ENCODE measurements at regions of chr13 and their contacts with region 1.

Region 1: GRCh38 chr13:38914070-38914469 is 76.6 kb downstream of the STOML3 start:
- DNase-seq: no peak
- H3K4me3 ChIP-seq: no peak overlapping the region
- H3K27ac ChIP-seq: no peak overlapping the region
- H3K4me1 ChIP-seq: no peaks in the 10 kb centered on the region
- H3K27me3 ChIP-seq: peaks cover 0 to 3% of the 10 kb centered on the region in 2 experiments
- CTCF ChIP-seq: no peak
- POLR2A ChIP-seq: no peak

Region 2: DNA sequence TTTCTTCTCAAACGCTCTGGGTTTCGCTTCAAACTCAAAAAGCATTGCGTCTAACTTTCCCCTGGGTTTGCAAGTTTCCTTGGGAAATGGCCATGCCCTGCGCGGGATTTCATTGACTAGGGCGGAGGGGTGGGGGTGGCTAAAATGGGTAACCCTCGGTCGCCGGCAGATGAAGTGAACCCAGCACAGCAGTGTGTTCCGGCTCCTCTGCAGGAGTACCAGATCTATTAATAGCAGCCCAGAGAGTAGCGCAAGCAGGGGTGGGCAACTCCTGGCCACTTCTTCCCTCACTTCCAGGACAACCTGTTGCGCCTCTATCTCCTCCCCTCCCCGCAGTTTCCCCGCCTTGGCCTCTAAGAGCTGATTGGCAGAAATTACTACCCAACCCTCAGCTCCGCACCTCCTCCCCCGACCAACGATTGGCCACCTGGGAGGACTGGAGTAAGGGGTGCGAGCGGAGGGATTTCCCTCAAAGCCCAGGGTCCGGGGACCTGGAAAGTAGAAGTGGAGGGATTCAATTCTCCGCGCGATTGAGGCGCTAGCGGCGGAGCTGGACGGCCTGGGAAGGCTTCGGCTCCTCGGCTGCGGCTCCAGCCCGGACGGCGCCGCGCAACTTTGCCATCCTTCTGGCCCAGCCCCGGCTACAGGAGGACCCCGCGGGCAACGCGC is 227.4 kb before region 1 on chr13 and contains the start of gene FREM2:
- CTCF ChIA-PET with region 1: interaction called, 5 read pairs
- POLR2A ChIA-PET with region 1: no interaction called
- dilution Hi-C with region 1: no loop called
- intact Hi-C with region 1: loop called (anchors 10 kb)
- DNase-seq: no peak
- H3K4me3 ChIP-seq: peak within 1 kb of the TSS in 2 of 3 experiments; percentile 9 to 28
- H3K27ac ChIP-seq: no peak within 1 kb of the TSS
- H3K4me1 ChIP-seq: peaks cover 3% of the 10 kb centered on the region
- H3K27me3 ChIP-seq: peaks cover 24 to 36% of the 10 kb centered on the region in 2 experiments
- CTCF ChIP-seq: no peak
- POLR2A ChIP-seq: no peak
- total RNA-seq, gene FREM2: not detected in 2 replicates

Region 3: GRCh38 chr13:38763439-38764381 is 150.4 kb before region 1 on chr13:
- CTCF ChIA-PET with region 1: no interaction called
- POLR2A ChIA-PET with region 1: no interaction called
- dilution Hi-C with region 1: no loop called
- intact Hi-C with region 1: loop called (anchors 1 kb)
- DNase-seq: peak; percentile 22
- H3K4me3 ChIP-seq: no peak overlapping the region
- H3K27ac ChIP-seq: no peak overlapping the region
- H3K4me1 ChIP-seq: no peaks in the 10 kb centered on the region
- H3K27me3 ChIP-seq: peaks cover 1 to 4% of the 10 kb centered on the region in 2 experiments
- CTCF ChIP-seq: peak; percentile 20 to 37
- POLR2A ChIP-seq: no peak

Region 4: DNA sequence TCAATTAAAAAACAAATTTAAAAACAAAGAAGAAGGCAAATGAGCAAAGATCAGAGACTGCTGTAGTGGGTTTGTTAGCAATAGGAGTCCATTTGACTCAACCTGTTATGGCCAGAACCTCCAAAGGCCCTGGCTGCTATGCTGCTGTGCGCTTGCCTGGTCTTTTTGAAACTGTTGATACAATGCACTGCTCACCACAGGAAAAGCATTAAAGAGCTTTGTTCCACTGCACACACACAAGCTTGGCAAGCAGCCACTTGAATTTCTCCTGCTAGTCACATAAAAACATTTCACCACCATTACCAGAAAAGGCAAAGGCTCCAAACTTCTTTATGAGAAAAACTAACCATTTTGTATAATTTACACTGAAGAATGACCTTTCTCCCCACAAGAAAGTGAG is 95.0 kb before region 1 on chr13:
- CTCF ChIA-PET with region 1: no interaction called
- POLR2A ChIA-PET with region 1: no interaction called
- dilution Hi-C with region 1: no loop called
- intact Hi-C with region 1: no loop called
- DNase-seq: peak; percentile 1
- H3K4me3 ChIP-seq: no peak overlapping the region
- H3K27ac ChIP-seq: no peak overlapping the region
- H3K4me1 ChIP-seq: no peaks in the 10 kb centered on the region
- H3K27me3 ChIP-seq: no peaks in the 10 kb centered on the region
- CTCF ChIP-seq: no peak
- POLR2A ChIP-seq: no peak

Region 5: GRCh38 chr13:39016787-39017186 is 102.7 kb after region 1 on chr13:
- CTCF ChIA-PET with region 1: no interaction called
- POLR2A ChIA-PET with region 1: no interaction called
- dilution Hi-C with region 1: no loop called
- intact Hi-C with region 1: loop called (anchors 2 kb)
- DNase-seq: peak; percentile 47
- H3K4me3 ChIP-seq: no peak overlapping the region
- H3K27ac ChIP-seq: no peak overlapping the region
- H3K4me1 ChIP-seq: no peaks in the 10 kb centered on the region
- H3K27me3 ChIP-seq: no peaks in the 10 kb centered on the region
- CTCF ChIP-seq: peak; percentile 21 to 56
- POLR2A ChIP-seq: no peak

Region 6: DNA sequence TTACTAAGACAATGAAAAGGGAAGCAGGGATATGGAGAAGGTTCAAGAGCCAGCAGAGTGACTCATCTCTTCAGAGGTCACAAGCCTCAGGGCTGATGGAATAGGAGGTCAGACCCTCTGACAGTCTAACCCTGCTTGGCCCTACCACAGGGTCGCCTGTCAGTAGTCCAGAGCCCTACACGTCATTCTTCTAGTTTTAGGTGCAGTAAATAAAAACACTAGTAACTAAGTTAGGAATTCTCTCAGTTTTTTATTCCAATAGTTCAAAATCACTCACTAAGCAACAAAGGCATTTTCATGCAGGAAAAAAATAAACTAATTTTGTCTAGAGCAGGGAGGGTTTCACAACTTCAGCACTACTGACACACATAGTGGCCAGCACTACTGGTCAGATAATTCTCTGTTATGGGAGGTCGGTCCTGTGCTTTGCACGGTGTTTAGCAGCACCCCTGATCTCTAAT is 1725.2 kb after region 1 on chr13:
- CTCF ChIA-PET with region 1: no interaction called
- POLR2A ChIA-PET with region 1: no interaction called
- dilution Hi-C with region 1: no loop called
- intact Hi-C with region 1: no loop called
- DNase-seq: peak; percentile 80
- H3K4me3 ChIP-seq: no peak overlapping the region
- H3K27ac ChIP-seq: peak overlapping the region; percentile 60
- H3K4me1 ChIP-seq: peaks cover 29% of the 10 kb centered on the region
- H3K27me3 ChIP-seq: no peaks in the 10 kb centered on the region
- CTCF ChIP-seq: no peak
- POLR2A ChIP-seq: no peak

Measured in endothelial cell of umbilical vein (primary cell).